HCT116 (cell line): ENCODE measurements at regions of chr16 and their contacts with region 1.

Region 1: GRCh38 chr16:28218104-28218503 is 6.3 kb upstream of the XPO6 start:
- DNase-seq: peak; percentile 47
- ATAC-seq: peak; percentile 98
- H3K4me3 ChIP-seq: no peak overlapping the region
- H3K27ac ChIP-seq: no peak overlapping the region
- H3K4me1 ChIP-seq: peaks cover 1 to 3% of the 10 kb centered on the region in 2 experiments; a peak in 2 of 4 replicates
- H3K27me3 ChIP-seq: no peaks in the 10 kb centered on the region
- CTCF ChIP-seq: peak; percentile 52 to 68 (median 59); a peak in 5 of 6 replicates
- POLR2A ChIP-seq: no peak
- RAD21 ChIP-seq: peak; percentile 74

Region 2: DNA sequence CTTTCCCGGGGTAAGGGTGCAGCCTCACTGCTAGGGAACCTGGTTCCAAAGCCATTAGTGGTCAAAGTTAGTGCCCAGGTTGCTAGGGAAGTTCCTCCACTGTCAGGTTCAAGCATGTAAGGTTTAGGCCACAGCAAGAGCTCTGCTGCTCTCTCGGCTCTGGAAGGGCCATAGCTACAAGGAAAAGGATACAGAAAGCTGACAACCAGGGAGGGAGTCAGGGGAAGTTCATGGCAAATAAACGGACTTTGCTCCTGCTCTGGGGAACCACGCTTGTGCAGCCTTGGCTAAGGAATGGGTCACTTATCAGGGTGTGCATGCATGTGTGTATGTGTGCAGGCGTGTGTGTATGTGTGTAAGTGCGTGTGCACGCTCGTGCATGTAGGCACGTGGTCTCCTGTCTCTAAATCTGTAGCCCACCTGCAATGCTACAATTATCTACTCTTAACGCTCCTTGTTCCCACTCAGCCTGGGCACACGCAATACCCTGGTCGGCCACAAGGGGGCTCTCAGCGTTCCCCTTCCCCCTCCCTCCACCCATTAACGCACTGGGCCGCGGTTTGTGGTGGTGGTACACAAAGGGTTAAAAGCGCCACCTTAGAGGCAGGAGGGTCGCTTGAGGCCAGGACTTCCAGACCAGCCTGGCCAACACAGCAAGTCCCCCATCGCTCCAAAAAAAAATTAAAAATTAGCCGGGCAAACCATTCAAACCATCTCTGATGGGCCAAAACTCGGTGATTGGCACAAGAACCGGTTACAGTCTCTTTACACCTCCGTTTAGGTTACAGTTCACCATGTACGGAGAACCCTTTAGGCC is 1063.2 kb before region 1 on chr16:
- CTCF ChIA-PET with region 1: no interaction called
- POLR2A ChIA-PET with region 1: no interaction called
- RAD21 ChIA-PET with region 1: no interaction called
- intact Hi-C with region 1: no loop called
- DNase-seq: peak; percentile 56
- ATAC-seq: peak; percentile 94
- H3K4me3 ChIP-seq: peak overlapping the region; percentile 36 to 40
- H3K27ac ChIP-seq: no peak overlapping the region
- H3K4me1 ChIP-seq: peaks cover 0 to 9% of the 10 kb centered on the region in 2 experiments; a peak in 2 of 4 replicates
- H3K27me3 ChIP-seq: no peaks in the 10 kb centered on the region
- CTCF ChIP-seq: peak; percentile 71 to 99 (median 98)
- POLR2A ChIP-seq: no peak
- RAD21 ChIP-seq: peak; percentile 71

Region 3: DNA sequence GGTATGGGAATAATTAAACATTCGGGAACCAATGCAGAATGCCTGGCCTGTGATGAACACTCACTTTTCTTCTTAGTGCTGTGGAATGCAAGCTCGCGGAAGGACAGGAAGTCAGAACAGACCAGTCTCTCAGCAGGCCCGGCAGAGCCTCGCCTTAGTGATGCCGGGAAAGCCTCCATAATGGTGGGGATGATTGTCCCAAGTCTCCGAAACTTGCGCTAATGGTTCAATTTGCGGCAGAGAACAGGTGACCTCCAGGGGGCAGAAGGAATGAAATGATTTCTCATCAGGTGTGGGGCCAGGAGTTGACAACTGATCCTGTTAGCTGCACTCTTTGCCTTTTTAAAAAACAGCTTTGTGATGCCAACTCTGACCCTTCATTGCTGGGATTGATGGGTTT is 325.2 kb before region 1 on chr16:
- CTCF ChIA-PET with region 1: interaction called, 4 read pairs
- POLR2A ChIA-PET with region 1: no interaction called
- RAD21 ChIA-PET with region 1: no interaction called
- intact Hi-C with region 1: loop called (anchors 2 kb)
- DNase-seq: peak; percentile 6
- ATAC-seq: peak; percentile 78
- H3K4me3 ChIP-seq: no peak overlapping the region
- H3K27ac ChIP-seq: no peak overlapping the region
- H3K4me1 ChIP-seq: no peaks in the 10 kb centered on the region
- H3K27me3 ChIP-seq: peaks cover 17% of the 10 kb centered on the region
- CTCF ChIP-seq: peak; percentile 27 to 51 (median 45); a peak in 4 of 6 replicates
- POLR2A ChIP-seq: no peak
- RAD21 ChIP-seq: no peak

Region 4: DNA sequence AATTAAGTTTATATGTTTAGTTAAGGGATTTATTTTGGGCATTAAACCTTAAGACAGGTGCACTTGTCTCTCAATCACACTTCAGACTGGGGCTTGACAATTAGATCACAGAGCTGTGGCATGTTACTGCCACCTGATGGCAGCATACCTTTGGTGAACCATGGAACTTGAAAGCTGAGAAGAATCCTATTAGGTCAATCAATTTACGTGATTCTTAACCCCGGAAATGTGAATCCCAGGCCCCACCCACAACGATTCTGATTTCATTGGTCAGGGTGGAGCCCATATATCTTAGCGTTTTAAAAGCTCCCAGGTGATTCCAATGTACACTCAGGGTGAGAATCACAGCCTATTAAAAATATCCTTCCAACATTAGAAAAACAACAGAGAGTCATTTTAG is 245.6 kb before region 1 on chr16:
- CTCF ChIA-PET with region 1: interaction called, 16 read pairs
- POLR2A ChIA-PET with region 1: no interaction called
- RAD21 ChIA-PET with region 1: no interaction called
- intact Hi-C with region 1: loop called (anchors 1 kb)
- DNase-seq: peak; percentile 73
- ATAC-seq: peak; percentile 96
- H3K4me3 ChIP-seq: no peak overlapping the region
- H3K27ac ChIP-seq: no peak overlapping the region
- H3K4me1 ChIP-seq: peaks cover 3 to 6% of the 10 kb centered on the region in 2 experiments; a peak in 3 of 4 replicates
- H3K27me3 ChIP-seq: no peaks in the 10 kb centered on the region
- CTCF ChIP-seq: peak; percentile 76 to 85 (median 78)
- POLR2A ChIP-seq: no peak
- RAD21 ChIP-seq: peak; percentile 83

Region 5: GRCh38 chr16:28166394-28167208 is 51.5 kb before region 1 on chr16:
- CTCF ChIA-PET with region 1: interaction called, 3 read pairs
- POLR2A ChIA-PET with region 1: interaction called, 3 read pairs
- RAD21 ChIA-PET with region 1: no interaction called
- intact Hi-C with region 1: loop called (anchors 5 kb)
- DNase-seq: peak; percentile 13
- ATAC-seq: peak; percentile 62
- H3K4me3 ChIP-seq: no peak overlapping the region
- H3K27ac ChIP-seq: 0 out of 2 replicates have a peak overlapping the region, but pooled peaks have one; percentile 15
- H3K4me1 ChIP-seq: peaks cover 0 to 11% of the 10 kb centered on the region in 2 experiments; a peak in 2 of 4 replicates
- H3K27me3 ChIP-seq: no peaks in the 10 kb centered on the region
- CTCF ChIP-seq: no peak
- POLR2A ChIP-seq: no peak
- RAD21 ChIP-seq: 0 out of 2 replicates have a peak, but pooled peaks have one; percentile 10